ENCODE measurements at regions of chr19 and their contacts with region 1.

Region 1: GRCh38 chr19:1189419-1189818 is 15.4 kb upstream of the SBNO2 start:
- DNase-seq: peak; percentile 64
- ATAC-seq: peak; percentile 59
- H3K4me3 Mint-ChIP-seq: no peak overlapping the region
- H3K27ac Mint-ChIP-seq: peak overlapping the region; percentile 62
- H3K4me1 Mint-ChIP-seq: peaks cover 23% of the 10 kb centered on the region
- H3K27me3 Mint-ChIP-seq: no peaks in the 10 kb centered on the region

Region 2: GRCh38 chr19:1205114-1206062 is 16.0 kb after region 1 on chr19 and contains the start of gene STK11:
- CTCF ChIA-PET with region 1: interaction called, 10 read pairs
- POLR2A ChIA-PET with region 1: no interaction called
- DNase-seq: peak; percentile 99
- ATAC-seq: peak; percentile 97
- H3K4me3 Mint-ChIP-seq: peak within 1 kb of the TSS; percentile 97
- H3K27ac Mint-ChIP-seq: peak within 1 kb of the TSS; percentile 93
- H3K4me1 Mint-ChIP-seq: peaks cover 33% of the 10 kb centered on the region
- H3K27me3 Mint-ChIP-seq: no peaks in the 10 kb centered on the region
- total RNA-seq, gene STK11: 68.8 to 70.8 TPM